ENCODE measurements at regions of chr6 and their contacts with region 1.

Region 1: GRCh38 chr6:79233611-79234149 is 802 bp downstream of the HMGN3 start:
- DNase-seq: peak; percentile 78 to 89 (median 86)
- H3K4me3 ChIP-seq: peak overlapping the region; percentile 60 to 91 (median 82)
- H3K27ac ChIP-seq: peak overlapping the region; percentile 54 to 96 (median 89)
- H3K27me3 ChIP-seq: no peaks in the 10 kb centered on the region
- CTCF ChIP-seq: peak in 31 of 56 donors; percentile 8 to 52 (median 31)

Region 2: GRCh38 chr6:79421707-79422484 is 188.2 kb after region 1 on chr6:
- intact Hi-C with region 1: loop called in 1 of 2 experiments (anchors 5 kb)
- DNase-seq: peak in 3 of 10 donors; percentile 22 to 64 (median 52)
- H3K4me3 ChIP-seq: peak overlapping the region; percentile 3 to 71 (median 52)
- H3K27ac ChIP-seq: peak overlapping the region in 58 of 59 donors; percentile 13 to 95 (median 84)
- H3K27me3 ChIP-seq: no peaks in the 10 kb centered on the region
- CTCF ChIP-seq: peak in 2 of 56 donors; percentile 5 to 12

Region 3: GRCh38 chr6:79466207-79466834 is 232.6 kb after region 1 on chr6:
- intact Hi-C with region 1: loop called in 1 of 2 experiments (anchors 10 kb)
- DNase-seq: no peak
- H3K4me3 ChIP-seq: no peak overlapping the region
- H3K27ac ChIP-seq: no peak overlapping the region
- H3K27me3 ChIP-seq: no peaks in the 10 kb centered on the region
- CTCF ChIP-seq: peak; percentile 17 to 79 (median 64)

Region 4: DNA sequence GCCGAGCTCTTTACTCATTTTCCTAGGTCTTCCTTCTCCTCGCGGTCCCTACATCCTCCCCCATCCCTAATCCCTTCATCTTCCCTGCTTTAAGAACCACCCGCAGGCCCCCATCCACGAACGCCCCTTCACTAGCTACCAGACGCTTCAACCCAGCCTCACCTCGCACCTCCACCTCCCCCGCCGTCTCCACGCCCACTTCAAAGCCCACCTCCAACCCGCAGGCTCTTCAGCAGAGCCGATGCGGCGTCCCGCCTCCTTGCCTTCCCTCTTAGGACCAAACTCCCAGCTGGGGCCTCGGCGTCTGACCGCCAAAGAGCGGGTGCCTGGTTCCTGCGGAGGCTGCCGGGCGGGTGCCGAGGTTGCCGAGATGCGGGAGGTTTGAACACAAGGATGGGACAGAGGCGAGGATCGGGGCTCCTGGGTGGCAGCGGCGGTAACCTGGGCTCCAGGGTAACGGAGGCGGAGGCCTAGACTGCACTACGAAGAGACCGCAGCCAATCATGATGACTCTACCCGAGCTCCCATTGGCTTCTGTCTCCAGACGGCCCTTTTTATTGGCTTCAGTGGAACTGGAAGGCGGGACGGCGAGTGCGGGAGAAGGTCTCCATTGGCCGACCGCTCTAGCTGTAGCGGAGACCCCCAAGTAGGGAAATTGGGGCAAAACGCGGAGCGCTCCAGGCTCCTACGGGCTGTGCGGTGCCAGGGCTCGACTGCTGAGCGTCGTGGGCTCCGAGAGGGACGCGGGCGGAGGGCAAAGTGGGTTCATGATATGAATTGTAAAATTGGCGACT is 303.5 kb after region 1 on chr6 and contains the start of gene LCA5:
- intact Hi-C with region 1: loop called in 1 of 2 experiments (anchors 10 kb)
- DNase-seq: peak; percentile 84 to 97 (median 96)
- H3K4me3 ChIP-seq: peak within 1 kb of the TSS; percentile 67 to 95 (median 85)
- H3K27ac ChIP-seq: peak within 1 kb of the TSS; percentile 37 to 96 (median 91)
- H3K27me3 ChIP-seq: no peaks in the 10 kb centered on the region
- CTCF ChIP-seq: peak in 10 of 56 donors; percentile 3 to 38 (median 15)
- total RNA-seq, gene LCA5: 7.3 to 17.7 (median 10.5) TPM

Measured in dorsolateral prefrontal cortex (tissue), 120 donors.